Gastrocnemius medialis (tissue), 4 donors: ENCODE measurements at regions of chr11 and their contacts with region 1.

Region 1: GRCh38 chr11:27124514-27125264 is 84.1 kb downstream of the BBOX1 start:
- DNase-seq: no peak
- ATAC-seq: no peak
- H3K4me3 ChIP-seq: no peak overlapping the region
- H3K27ac ChIP-seq: no peak overlapping the region
- H3K4me1 ChIP-seq: no peaks in the 10 kb centered on the region
- H3K27me3 ChIP-seq: no peaks in the 10 kb centered on the region
- CTCF ChIP-seq: no peak
- POLR2A ChIP-seq: no peak

Region 2: DNA sequence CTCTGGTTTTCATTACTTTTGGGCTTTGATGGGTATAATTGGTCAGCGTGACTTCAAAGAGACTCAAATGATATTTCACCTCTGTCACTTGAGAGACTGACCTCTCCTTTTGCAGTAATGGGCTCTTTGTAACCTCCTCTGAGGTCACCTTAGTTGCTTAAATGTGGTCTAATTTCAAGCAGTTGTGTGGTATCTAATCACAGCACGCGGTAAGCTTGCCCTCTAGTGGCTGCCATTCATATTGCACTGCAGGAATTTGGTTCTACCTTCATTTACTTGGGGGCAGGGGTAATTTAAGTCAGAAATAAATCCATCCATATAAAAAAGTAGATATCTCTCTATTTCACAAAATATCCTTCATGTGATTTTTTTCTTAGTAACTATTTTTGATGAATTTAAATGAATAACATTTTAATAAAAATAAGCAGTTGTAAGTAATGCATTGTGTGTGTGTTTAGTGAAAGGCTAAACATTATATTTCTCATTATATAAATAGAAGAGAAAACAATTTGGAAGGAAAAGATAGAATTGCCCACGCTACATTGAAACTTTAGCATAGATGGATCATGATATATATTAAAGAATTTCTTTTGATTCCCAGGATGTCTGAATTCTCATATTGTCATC is 847.8 kb before region 1 on chr11:
- in situ Hi-C with region 1: loop called in 1 of 4 experiments (anchors 25 kb)
- intact Hi-C with region 1: no loop called
- DNase-seq: peak in 1 of 2 donors; percentile 18
- ATAC-seq: peak in 1 of 2 donors; percentile 53
- H3K4me3 ChIP-seq: no peak overlapping the region
- H3K27ac ChIP-seq: no peak overlapping the region
- H3K4me1 ChIP-seq: no peaks in the 10 kb centered on the region
- H3K27me3 ChIP-seq: no peaks in the 10 kb centered on the region
- CTCF ChIP-seq: peak; percentile 68 to 90 (median 70)
- POLR2A ChIP-seq: no peak

Region 3: GRCh38 chr11:26753723-26754504 is 370.8 kb before region 1 on chr11:
- in situ Hi-C with region 1: loop called in 2 of 4 experiments (anchors 5 to 10 kb)
- intact Hi-C with region 1: loop called (anchors 2 kb)
- DNase-seq: peak; percentile 12 to 30
- ATAC-seq: peak; percentile 85 to 86
- H3K4me3 ChIP-seq: no peak overlapping the region
- H3K27ac ChIP-seq: no peak overlapping the region
- H3K4me1 ChIP-seq: no peaks in the 10 kb centered on the region
- H3K27me3 ChIP-seq: no peaks in the 10 kb centered on the region
- CTCF ChIP-seq: peak; percentile 55 to 72 (median 69)
- POLR2A ChIP-seq: no peak